K562 (cell line): ENCODE measurements at regions of chr5 and their contacts with region 1.

Region 1: GRCh38 chr5:95730730-95731570 is at the start of gene RHOBTB3:
- DNase-seq: peak; percentile 73 to 94 (median 86)
- ATAC-seq: peak; percentile 58
- H3K4me3 ChIP-seq: peak within 1 kb of the TSS; percentile 81
- H3K27ac ChIP-seq: peak within 1 kb of the TSS; percentile 85
- H3K4me1 ChIP-seq: peaks cover 38 to 40% of the 10 kb centered on the region in 2 experiments
- H3K27me3 ChIP-seq: no peaks in the 10 kb centered on the region; a peak in 1 of 5 replicates
- CTCF ChIP-seq: peak in 2 of 3 experiments; percentile 20 to 31; a peak in 2 of 6 replicates
- EP300 ChIP-seq: peak; percentile 54
- POLR2A ChIP-seq: no peak
- RAD21 ChIP-seq: peak; percentile 27 to 37; a peak in 1 of 4 replicates
- polyA plus RNA-seq, gene RHOBTB3: 39.7 to 53.0 TPM

Region 2: GRCh38 chr5:95646554-95647431 is 84.2 kb before region 1 on chr5 and contains the start of gene RFESD:
- CTCF ChIA-PET with region 1: no interaction called
- POLR2A ChIA-PET with region 1: interaction called, 15 read pairs
- in situ Hi-C with region 1: no loop called
- intact Hi-C with region 1: loop called (anchors 1 kb)
- DNase-seq: peak; percentile 92 to 99 (median 94)
- ATAC-seq: peak; percentile 89
- H3K4me3 ChIP-seq: peak within 1 kb of the TSS; percentile 49
- H3K27ac ChIP-seq: peak within 1 kb of the TSS; percentile 95
- H3K4me1 ChIP-seq: peaks cover 13 to 18% of the 10 kb centered on the region in 2 experiments
- H3K27me3 ChIP-seq: no peaks in the 10 kb centered on the region
- CTCF ChIP-seq: peak in 1 of 3 experiments; percentile 27; a peak in 2 of 6 replicates
- EP300 ChIP-seq: peak; percentile 52; the same call in 1 of the 2 replicates
- POLR2A ChIP-seq: peak; percentile 95
- RAD21 ChIP-seq: no peak; a peak in 2 of 4 replicates
- polyA plus RNA-seq, gene RFESD: 506 to 600 TPM

Region 3: DNA sequence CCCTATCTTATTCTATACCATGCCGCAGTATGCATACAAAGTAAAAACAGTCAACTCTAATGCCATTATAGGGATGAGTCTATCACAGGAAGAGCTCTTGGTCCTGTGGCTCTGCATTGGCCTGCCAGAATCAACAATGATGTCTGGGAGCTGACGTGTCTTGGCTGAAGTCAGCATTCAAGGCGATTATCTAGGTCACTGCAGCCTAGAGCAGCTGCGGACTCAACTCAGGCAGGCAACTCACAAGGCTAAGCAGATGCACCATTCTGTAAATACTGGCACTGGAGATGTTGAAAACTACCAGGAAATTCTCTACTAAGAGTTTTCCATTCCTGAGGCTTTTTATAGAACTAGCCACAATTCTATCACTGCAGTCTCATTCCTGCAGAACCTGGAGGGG is 61.4 kb before region 1 on chr5:
- CTCF ChIA-PET with region 1: interaction called, 3 read pairs
- POLR2A ChIA-PET with region 1: interaction called, 18 read pairs
- in situ Hi-C with region 1: loop called (anchors 5 kb)
- intact Hi-C with region 1: loop called (anchors 1 kb)
- DNase-seq: peak in 2 of 4 experiments; percentile 41 to 75
- ATAC-seq: peak; percentile 70
- H3K4me3 ChIP-seq: no peak overlapping the region
- H3K27ac ChIP-seq: 0 out of 3 replicates have a peak overlapping the region, but pooled peaks have one; percentile 1
- H3K4me1 ChIP-seq: peaks cover 3 to 28% of the 10 kb centered on the region in 2 experiments; a peak in 4 of 5 replicates
- H3K27me3 ChIP-seq: no peaks in the 10 kb centered on the region
- CTCF ChIP-seq: no peak
- EP300 ChIP-seq: no peak
- POLR2A ChIP-seq: no peak
- RAD21 ChIP-seq: no peak

Region 4: DNA sequence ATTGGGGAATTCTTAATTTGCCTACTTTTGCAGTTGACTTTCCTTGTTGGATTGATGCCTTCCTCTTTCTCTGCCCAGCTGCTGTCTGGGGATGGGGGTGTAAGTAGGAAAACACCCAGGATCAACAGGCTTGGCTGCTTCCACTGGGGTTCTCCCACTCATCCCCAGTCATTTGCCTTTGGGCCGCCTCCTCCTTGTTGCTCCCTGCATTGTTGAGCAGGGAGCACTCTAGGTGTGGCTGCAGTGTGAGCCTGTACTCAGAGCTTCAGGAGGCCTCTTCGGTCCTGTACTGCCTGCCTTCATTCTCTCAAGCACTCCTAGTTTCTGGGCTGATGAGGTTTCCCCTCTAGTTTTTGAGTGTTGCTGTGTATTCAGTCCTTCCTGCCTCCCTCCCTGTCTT is 12.3 kb after region 1 on chr5:
- CTCF ChIA-PET with region 1: no interaction called
- POLR2A ChIA-PET with region 1: interaction called, 14 read pairs
- in situ Hi-C with region 1: no loop called
- intact Hi-C with region 1: no loop called
- DNase-seq: no peak
- ATAC-seq: peak; percentile 62
- H3K4me3 ChIP-seq: no peak overlapping the region
- H3K27ac ChIP-seq: no peak overlapping the region
- H3K4me1 ChIP-seq: peaks cover 4% of the 10 kb centered on the region in 2 experiments; a peak in 3 of 5 replicates
- H3K27me3 ChIP-seq: no peaks in the 10 kb centered on the region
- CTCF ChIP-seq: no peak
- EP300 ChIP-seq: no peak
- POLR2A ChIP-seq: 0 out of 2 replicates have a peak, but pooled peaks have one; percentile 50
- RAD21 ChIP-seq: no peak